ENCODE measurements at regions of chr9 and their contacts with region 1.

Region 1: DNA sequence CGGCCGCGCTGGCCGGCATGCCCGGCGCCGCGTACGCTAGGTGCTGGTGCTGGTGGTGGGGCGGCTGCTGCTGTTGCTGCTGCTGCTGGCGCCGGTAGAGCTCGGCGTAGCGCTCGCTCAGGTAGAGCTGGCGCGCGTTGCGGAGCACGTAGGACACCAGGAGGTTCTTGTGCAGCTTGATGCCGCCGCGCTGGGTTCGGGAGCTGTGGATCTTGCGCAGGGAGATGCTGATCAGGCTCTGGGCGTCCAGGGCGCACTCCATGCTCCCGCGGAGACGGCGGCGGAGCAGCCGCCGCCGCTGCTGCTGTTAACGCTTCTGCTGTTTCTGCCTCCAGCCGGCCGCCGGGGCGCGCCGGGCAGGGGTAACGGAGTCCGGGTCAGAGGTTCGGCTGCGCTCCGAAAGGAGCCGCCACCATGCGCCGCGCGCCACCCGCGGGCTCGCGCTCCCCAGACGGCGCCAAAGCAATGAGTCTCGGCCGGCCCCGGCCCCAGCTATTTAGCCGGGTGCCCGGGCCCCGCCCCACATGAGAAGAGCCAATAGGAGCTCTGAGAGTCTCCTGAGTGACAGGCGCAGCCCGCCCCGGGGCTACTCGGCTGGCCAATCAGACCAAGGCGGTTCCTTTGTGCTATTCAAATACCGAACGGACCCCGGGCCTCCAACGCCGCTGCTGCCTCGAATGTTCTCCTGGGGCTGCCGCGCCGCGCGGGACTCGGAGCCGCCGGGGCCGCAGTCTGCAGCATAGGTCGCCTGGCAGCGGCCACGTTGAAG is at the start of gene IER5L:
- DNase-seq: peak; percentile 99
- H3K4me3 ChIP-seq: peak within 1 kb of the TSS; percentile 81 to 93
- H3K27ac ChIP-seq: peak within 1 kb of the TSS; percentile 91 to 99
- H3K4me1 ChIP-seq: peaks cover 18% of the 10 kb centered on the region
- H3K27me3 ChIP-seq: no peaks in the 10 kb centered on the region
- CTCF ChIP-seq: no peak
- POLR2A ChIP-seq: peak; percentile 89
- total RNA-seq, gene IER5L: 12.6 to 25.4 TPM

Region 2: DNA sequence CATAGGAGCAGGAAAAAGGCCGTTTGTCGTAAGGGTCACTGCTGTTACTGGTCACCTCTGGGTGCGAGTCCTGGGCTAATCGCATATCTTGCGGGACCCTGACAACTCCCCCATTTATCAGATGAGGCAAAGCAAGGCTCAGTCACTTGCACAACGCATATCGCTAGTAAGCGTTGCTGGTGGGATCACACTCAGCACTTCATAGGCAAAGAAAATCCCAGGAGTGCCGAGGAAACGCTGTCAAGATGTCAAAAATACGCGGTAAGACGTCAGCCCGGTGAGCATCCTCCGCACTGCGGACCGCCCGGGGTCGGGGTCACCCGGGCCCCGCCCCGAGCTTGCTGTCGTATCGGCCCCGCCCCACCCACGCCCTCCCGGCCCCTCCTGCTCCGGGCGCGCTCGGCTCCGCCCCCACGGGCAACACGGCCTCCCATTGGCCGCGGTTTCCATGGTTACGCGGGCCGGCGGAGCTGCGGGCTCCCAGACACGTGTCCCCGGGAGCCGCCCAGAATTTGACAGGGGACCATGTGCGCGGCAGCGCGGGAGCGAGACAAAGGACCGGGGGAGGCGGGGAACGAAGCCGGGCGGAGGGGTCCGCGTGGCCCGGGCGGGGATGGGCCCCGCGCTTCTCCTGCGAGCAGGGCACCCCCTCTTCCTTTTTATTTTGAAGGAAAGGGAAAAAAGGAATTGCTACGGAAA is 80.3 kb after region 1 on chr9:
- intact Hi-C with region 1: loop called (anchors 10 kb)
- DNase-seq: peak; percentile 96
- H3K4me3 ChIP-seq: peak overlapping the region; percentile 24 to 38
- H3K27ac ChIP-seq: peak overlapping the region in 1 of 2 donors; percentile 41
- H3K4me1 ChIP-seq: peaks cover 26% of the 10 kb centered on the region
- H3K27me3 ChIP-seq: no peaks in the 10 kb centered on the region
- CTCF ChIP-seq: no peak
- POLR2A ChIP-seq: no peak

Region 3: GRCh38 chr9:129495534-129496325 is 317.8 kb after region 1 on chr9:
- intact Hi-C with region 1: loop called (anchors 10 kb)
- DNase-seq: peak; percentile 97
- H3K4me3 ChIP-seq: peak overlapping the region; percentile 51 to 62
- H3K27ac ChIP-seq: peak overlapping the region; percentile 93 to 94
- H3K4me1 ChIP-seq: peaks cover 61% of the 10 kb centered on the region
- H3K27me3 ChIP-seq: no peaks in the 10 kb centered on the region
- CTCF ChIP-seq: no peak
- POLR2A ChIP-seq: no peak

Measured in testis (tissue), 5 donors.